ENCODE measurements at regions of chr22 and their contacts with region 1.

Region 1: DNA sequence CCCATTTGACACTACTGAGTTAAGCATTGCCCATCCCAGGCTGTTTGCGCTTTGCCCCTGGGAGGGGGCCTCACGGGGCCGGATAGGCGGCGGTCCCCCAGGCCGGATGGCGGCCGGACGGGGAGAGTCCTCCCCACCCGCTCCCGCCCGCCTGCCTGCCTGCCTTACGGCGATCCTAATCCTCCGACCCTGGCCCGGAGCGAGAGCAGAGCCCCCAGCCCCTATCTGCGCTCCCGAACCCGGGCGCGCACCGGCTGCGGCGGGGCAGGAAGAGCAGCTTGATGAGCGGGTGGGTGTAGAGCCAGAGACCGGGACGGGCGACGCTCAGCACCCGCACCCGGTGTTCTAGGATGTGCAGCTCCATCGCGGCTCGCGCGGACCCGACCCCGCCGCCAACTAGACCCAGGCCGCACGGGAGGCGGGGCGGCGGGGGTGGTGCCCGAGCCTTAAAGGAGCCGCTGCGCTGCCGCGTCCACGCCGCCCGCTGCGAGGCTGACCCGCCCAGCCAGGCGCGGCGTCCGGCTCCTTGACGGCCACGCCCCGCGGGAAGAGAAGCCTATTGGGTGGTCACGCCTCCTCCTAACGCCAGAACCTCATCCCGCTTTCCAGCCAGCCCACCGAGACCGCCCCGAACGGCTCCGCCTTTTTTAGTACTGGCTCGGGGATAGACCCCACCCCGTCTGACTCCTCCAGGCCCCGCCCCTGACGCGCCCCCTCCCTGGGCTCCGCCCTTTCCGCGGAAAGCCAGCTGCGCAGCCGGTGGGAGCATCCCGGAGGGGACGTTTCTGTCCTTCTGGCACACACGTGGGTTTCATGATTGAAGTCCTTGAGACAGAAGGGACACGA is at the start of gene CASTOR1:
- DNase-seq: peak; percentile 67 to 93 (median 91)
- ATAC-seq: peak; percentile 82
- H3K4me3 ChIP-seq: peak within 1 kb of the TSS; percentile 72 to 76
- H3K4me3 Mint-ChIP-seq: peak within 1 kb of the TSS; percentile 90
- H3K27ac ChIP-seq: peak within 1 kb of the TSS; percentile 44 to 71
- H3K27ac Mint-ChIP-seq: peak within 1 kb of the TSS; percentile 84
- H3K4me1 ChIP-seq: peaks cover 34% of the 10 kb centered on the region
- H3K4me1 Mint-ChIP-seq: peaks cover 45% of the 10 kb centered on the region
- H3K27me3 ChIP-seq: no peaks in the 10 kb centered on the region
- H3K27me3 Mint-ChIP-seq: no peaks in the 10 kb centered on the region
- CTCF ChIP-seq: no peak
- total RNA-seq, gene CASTOR1: 17.2 to 21.9 TPM

Region 2: GRCh38 chr22:29766632-29767170 is 522.7 kb before region 1 on chr22 and contains the start of gene ZMAT5:
- CTCF ChIA-PET with region 1: no interaction called
- POLR2A ChIA-PET with region 1: no interaction called
- intact Hi-C with region 1: no loop called
- DNase-seq: peak; percentile 77 to 97 (median 92)
- ATAC-seq: peak; percentile 94
- H3K4me3 ChIP-seq: peak within 1 kb of the TSS; percentile 83 to 95
- H3K4me3 Mint-ChIP-seq: peak within 1 kb of the TSS; percentile 100
- H3K27ac ChIP-seq: peak within 1 kb of the TSS; percentile 72 to 84
- H3K27ac Mint-ChIP-seq: peak within 1 kb of the TSS; percentile 98
- H3K4me1 ChIP-seq: peaks cover 23% of the 10 kb centered on the region
- H3K4me1 Mint-ChIP-seq: peaks cover 41% of the 10 kb centered on the region
- H3K27me3 ChIP-seq: no peaks in the 10 kb centered on the region
- H3K27me3 Mint-ChIP-seq: no peaks in the 10 kb centered on the region
- CTCF ChIP-seq: no peak
- total RNA-seq, gene ZMAT5: 4.3 to 5.2 TPM

Region 3: DNA sequence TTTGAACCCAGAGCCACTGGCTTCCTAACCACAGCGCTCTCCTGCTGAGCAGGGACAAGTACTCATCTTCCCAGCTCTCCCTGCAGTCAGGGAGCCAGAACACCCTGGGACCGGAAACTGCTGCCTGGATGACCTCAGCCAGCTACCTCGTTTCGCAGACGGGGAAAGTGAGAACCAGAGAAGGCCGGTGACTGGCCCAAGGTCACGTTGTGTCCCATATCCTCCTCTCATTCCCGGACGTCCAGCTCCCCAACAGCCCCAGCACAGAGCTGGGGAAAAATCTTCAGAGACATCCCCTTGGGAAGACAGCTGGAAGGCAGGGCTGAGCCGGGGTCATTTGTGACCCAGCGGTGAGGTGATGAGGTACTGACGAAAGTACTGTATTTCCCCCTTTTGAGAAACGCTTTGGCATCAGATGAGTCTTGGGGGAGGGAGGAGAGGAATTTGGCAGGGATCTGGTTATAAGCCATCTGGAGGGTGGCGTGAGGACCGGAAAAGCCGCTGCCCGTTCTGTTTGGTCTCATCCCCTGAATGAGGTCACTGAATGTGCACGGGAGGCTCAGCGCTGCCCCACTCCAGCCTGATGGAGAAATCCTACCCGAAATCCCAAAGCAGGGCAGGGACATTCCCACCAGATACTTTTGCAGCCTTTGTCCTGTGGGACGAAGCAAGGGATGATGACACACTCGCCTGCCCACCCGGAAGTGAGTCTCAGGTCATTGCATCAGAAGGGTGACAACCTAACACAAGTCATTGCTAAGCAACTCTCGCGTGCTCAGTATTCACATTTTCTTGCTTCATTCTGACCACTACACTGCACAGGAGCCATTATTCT is 83.9 kb before region 1 on chr22:
- CTCF ChIA-PET with region 1: no interaction called
- POLR2A ChIA-PET with region 1: no interaction called
- intact Hi-C with region 1: no loop called
- DNase-seq: no peak
- ATAC-seq: no peak
- H3K4me3 ChIP-seq: no peak overlapping the region
- H3K4me3 Mint-ChIP-seq: no peak overlapping the region
- H3K27ac ChIP-seq: no peak overlapping the region
- H3K27ac Mint-ChIP-seq: no peak overlapping the region
- H3K4me1 ChIP-seq: no peaks in the 10 kb centered on the region
- H3K4me1 Mint-ChIP-seq: no peaks in the 10 kb centered on the region
- H3K27me3 ChIP-seq: no peaks in the 10 kb centered on the region
- H3K27me3 Mint-ChIP-seq: no peaks in the 10 kb centered on the region
- CTCF ChIP-seq: no peak

Region 4: GRCh38 chr22:30262917-30263741 is 26.2 kb before region 1 on chr22:
- CTCF ChIA-PET with region 1: no interaction called
- POLR2A ChIA-PET with region 1: interaction called, 5 read pairs
- intact Hi-C with region 1: loop called (anchors 1 kb)
- DNase-seq: peak; percentile 57 to 88 (median 82)
- ATAC-seq: no peak
- H3K4me3 ChIP-seq: peak overlapping the region; percentile 7 to 13
- H3K4me3 Mint-ChIP-seq: peak overlapping the region; percentile 43
- H3K27ac ChIP-seq: no peak overlapping the region
- H3K27ac Mint-ChIP-seq: no peak overlapping the region
- H3K4me1 ChIP-seq: peaks cover 32% of the 10 kb centered on the region
- H3K4me1 Mint-ChIP-seq: peaks cover 37% of the 10 kb centered on the region
- H3K27me3 ChIP-seq: no peaks in the 10 kb centered on the region
- H3K27me3 Mint-ChIP-seq: no peaks in the 10 kb centered on the region
- CTCF ChIP-seq: peak; percentile 100

Region 5: DNA sequence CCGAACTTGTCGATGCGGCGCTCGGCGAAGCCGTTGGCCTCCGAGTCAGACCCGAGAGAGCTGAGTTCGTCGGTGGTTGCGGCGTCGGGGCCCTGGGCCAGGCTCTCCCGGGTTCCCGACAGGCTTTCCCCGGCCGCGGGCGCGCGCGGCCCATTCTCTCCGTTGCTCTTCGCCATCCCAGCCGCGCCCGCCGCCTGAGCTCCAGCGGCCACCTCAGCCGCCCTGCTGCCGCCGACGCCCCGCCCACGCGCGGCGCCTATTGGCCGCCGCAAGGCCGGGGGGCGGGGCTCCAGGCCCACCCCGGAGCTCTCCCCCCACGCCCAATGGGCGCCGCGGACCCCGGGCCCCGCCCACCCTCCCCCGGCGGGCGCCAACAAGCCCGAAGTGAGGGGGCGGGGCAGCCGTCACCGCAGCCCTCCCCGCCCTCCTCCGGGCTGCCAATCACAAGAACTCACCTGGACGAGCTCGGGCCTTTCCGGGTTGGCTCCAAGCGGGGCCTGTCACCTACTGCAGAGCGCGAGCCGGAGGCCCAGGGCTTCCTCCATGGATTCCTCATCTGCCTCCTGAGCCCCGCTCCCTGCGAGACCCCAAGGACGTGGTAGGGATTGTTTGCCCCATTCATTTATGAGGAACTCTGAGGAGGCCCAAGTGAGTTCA is 37.5 kb after region 1 on chr22 and contains the start of gene TBC1D10A:
- CTCF ChIA-PET with region 1: interaction called, 185 read pairs
- POLR2A ChIA-PET with region 1: interaction called, 143 read pairs
- intact Hi-C with region 1: loop called (anchors 1 kb)
- DNase-seq: peak; percentile 86 to 97 (median 94)
- ATAC-seq: peak; percentile 92
- H3K4me3 ChIP-seq: peak within 1 kb of the TSS; percentile 52 to 72
- H3K4me3 Mint-ChIP-seq: peak within 1 kb of the TSS; percentile 93
- H3K27ac ChIP-seq: peak within 1 kb of the TSS; percentile 68 to 86
- H3K27ac Mint-ChIP-seq: peak within 1 kb of the TSS; percentile 91
- H3K4me1 ChIP-seq: peaks cover 47% of the 10 kb centered on the region
- H3K4me1 Mint-ChIP-seq: peaks cover 45% of the 10 kb centered on the region
- H3K27me3 ChIP-seq: no peaks in the 10 kb centered on the region
- H3K27me3 Mint-ChIP-seq: no peaks in the 10 kb centered on the region
- CTCF ChIP-seq: no peak
- total RNA-seq, gene TBC1D10A: 77.5 to 87.3 TPM

Region 6: GRCh38 chr22:30356449-30357235 is 67.3 kb after region 1 on chr22 and contains the starts of genes CCDC157 and SF3A1:
- CTCF ChIA-PET with region 1: interaction called, 101 read pairs
- POLR2A ChIA-PET with region 1: interaction called, 49 read pairs
- intact Hi-C with region 1: loop called (anchors 1 kb)
- DNase-seq: peak; percentile 74 to 96 (median 87)
- ATAC-seq: peak; percentile 83
- H3K4me3 ChIP-seq: peak within 1 kb of the TSS; percentile 73 to 94
- H3K4me3 Mint-ChIP-seq: peak within 1 kb of the TSS; percentile 92
- H3K27ac ChIP-seq: peak within 1 kb of the TSS; percentile 93 to 99
- H3K27ac Mint-ChIP-seq: peak within 1 kb of the TSS; percentile 93
- H3K4me1 ChIP-seq: peaks cover 44% of the 10 kb centered on the region
- H3K4me1 Mint-ChIP-seq: peaks cover 48% of the 10 kb centered on the region
- H3K27me3 ChIP-seq: no peaks in the 10 kb centered on the region
- H3K27me3 Mint-ChIP-seq: no peaks in the 10 kb centered on the region
- CTCF ChIP-seq: no peak
- total RNA-seq, gene CCDC157: 8.7 to 11.7 TPM
- total RNA-seq, gene SF3A1: 406 to 422 TPM

Region 7: GRCh38 chr22:30386960-30387827 is 97.8 kb after region 1 on chr22 and contains the start of gene RNF215:
- CTCF ChIA-PET with region 1: interaction called, 528 read pairs
- POLR2A ChIA-PET with region 1: interaction called, 49 read pairs
- intact Hi-C with region 1: loop called (anchors 1 kb)
- DNase-seq: peak; percentile 60 to 91 (median 75)
- ATAC-seq: peak; percentile 79
- H3K4me3 ChIP-seq: peak within 1 kb of the TSS; percentile 33 to 40
- H3K4me3 Mint-ChIP-seq: peak within 1 kb of the TSS; percentile 85
- H3K27ac ChIP-seq: no peak within 1 kb of the TSS
- H3K27ac Mint-ChIP-seq: peak within 1 kb of the TSS; percentile 82
- H3K4me1 ChIP-seq: peaks cover 16% of the 10 kb centered on the region
- H3K4me1 Mint-ChIP-seq: peaks cover 26% of the 10 kb centered on the region
- H3K27me3 ChIP-seq: peaks cover 0 to 2% of the 10 kb centered on the region in 2 experiments
- H3K27me3 Mint-ChIP-seq: no peaks in the 10 kb centered on the region
- CTCF ChIP-seq: peak; percentile 87
- total RNA-seq, gene RNF215: 7.0 to 7.4 TPM